ENCODE measurements at regions of chr7 and their contacts with region 1.

Region 1: GRCh38 chr7:21253740-21254687 is 173.9 kb upstream of the SP4 start:
- DNase-seq: peak; percentile 84
- H3K4me3 Mint-ChIP-seq: peak overlapping the region; percentile 73
- H3K27ac Mint-ChIP-seq: no peak overlapping the region
- H3K4me1 Mint-ChIP-seq: peaks cover 9% of the 10 kb centered on the region
- H3K27me3 Mint-ChIP-seq: peaks cover 56% of the 10 kb centered on the region

Region 2: DNA sequence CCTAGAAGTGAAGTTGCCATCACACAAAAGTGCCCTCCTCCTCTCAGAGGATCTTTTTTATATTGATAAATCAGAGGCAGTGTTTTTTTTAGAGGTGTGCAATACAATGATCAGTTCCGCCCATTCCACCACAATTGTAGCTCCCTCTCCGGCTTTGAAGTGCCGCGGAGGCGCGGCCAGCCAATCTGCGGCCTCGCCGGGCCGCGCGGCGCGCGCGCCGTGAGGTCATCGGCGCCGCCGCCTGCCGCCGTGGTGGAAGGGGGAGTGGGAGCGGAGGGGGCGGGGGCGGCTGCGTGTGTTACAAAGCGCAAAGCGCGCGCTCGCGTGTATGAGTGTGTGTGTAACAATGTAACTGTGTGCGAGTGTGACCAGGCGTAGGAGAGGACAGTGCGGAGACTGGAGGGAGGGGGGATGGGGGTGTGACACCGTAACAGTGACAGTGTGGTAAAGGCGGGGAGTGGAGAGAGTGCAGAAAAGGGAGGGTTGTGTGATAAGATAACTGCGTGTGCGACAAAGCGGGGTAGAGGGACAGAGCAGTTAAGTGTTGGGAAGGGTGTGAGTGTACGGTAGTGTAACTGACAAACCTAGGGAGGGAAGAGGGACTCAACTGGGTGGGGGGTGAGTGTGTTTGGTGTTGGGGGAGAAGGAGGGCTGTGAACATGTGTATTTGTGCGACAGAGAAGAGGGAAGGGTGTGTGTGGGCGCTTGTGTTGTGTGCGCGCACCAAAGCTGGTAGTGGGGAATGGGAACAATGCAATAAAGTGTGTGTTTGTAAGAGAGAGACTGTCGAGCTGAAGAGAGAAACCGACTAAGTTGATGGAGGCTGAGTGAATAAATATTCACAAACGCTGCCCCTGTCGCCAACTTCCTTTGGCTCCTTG is 467.0 kb before region 1 on chr7 and contains the start of gene SP8:
- intact Hi-C with region 1: loop called (anchors 5 kb)
- DNase-seq: peak; percentile 70
- H3K4me3 Mint-ChIP-seq: peak within 1 kb of the TSS; percentile 66
- H3K27ac Mint-ChIP-seq: peak within 1 kb of the TSS; percentile 83
- H3K4me1 Mint-ChIP-seq: peaks cover 22% of the 10 kb centered on the region
- H3K27me3 Mint-ChIP-seq: peaks cover 75% of the 10 kb centered on the region
- total RNA-seq, gene SP8: not detected in 2 replicates

Region 3: DNA sequence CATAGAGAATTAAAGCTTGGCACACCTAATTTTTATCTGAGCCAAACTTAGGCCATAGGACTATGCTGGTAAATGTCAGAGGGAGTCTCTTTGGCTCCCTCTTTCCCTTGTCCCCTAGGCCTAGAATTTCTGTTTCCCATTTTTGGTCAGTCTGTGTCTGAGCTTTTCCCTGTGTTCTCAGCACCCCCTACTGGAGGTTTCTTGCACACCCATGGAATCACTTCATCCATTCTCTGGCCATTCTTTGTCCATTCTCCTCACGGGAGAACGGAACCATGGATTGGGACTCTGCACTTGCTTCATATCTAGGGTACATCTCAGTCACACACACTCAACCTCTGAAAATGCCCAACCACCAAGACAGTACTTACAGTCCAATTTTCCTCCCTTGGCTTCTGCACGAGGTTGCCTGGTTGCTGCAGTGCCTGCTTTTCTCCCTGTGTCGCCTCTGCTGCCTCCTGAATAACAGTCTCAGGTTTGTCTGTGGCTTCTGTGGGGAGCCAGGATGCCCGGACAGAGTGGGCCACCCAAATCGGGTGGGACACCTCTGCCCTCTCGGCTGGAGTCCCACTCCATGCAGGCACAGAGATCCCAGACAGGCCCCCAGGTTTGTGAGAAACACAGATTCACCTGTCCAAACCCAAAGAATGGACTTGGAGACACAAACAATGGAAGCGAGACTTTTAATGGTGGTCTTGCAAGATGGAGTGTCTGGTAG is 253.8 kb after region 1 on chr7:
- intact Hi-C with region 1: loop called (anchors 2 kb)
- DNase-seq: peak; percentile 73
- H3K4me3 Mint-ChIP-seq: no peak overlapping the region
- H3K27ac Mint-ChIP-seq: no peak overlapping the region
- H3K4me1 Mint-ChIP-seq: peaks cover 4% of the 10 kb centered on the region
- H3K27me3 Mint-ChIP-seq: no peaks in the 10 kb centered on the region

Region 4: DNA sequence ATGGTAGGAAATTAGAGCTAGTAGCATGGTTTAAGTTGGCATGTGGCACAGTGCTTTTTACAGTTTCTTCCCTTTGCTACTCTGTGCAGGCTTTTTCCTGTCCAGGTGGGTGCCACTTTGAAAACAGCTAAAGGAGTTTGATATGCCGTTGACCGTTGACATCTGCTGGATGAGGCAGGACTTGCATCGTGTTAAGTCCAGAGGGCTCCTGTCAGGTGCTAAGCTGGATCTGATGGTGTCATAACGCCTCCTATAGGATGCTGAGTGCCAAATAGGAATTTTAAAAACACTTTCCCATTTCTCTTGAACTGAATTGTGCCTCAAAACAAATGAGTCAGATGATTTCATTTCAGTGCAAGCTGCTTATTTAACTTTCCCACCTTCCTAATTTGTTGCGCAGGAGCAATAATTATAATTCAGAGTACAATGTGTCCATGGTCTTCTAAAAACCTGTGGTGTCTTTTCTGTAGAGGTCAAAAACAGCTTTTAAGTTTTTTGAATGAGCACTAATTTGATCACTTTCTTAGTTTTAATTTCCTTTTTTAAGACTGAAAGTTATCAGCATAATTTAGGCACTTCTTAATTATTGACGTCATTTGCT is 513.4 kb after region 1 on chr7:
- intact Hi-C with region 1: loop called (anchors 1 kb)
- DNase-seq: peak; percentile 79
- H3K4me3 Mint-ChIP-seq: no peak overlapping the region
- H3K27ac Mint-ChIP-seq: no peak overlapping the region
- H3K4me1 Mint-ChIP-seq: peaks cover 18% of the 10 kb centered on the region
- H3K27me3 Mint-ChIP-seq: peaks cover 14% of the 10 kb centered on the region

Region 5: GRCh38 chr7:22082886-22083703 is 829.1 kb after region 1 on chr7:
- intact Hi-C with region 1: loop called (anchors 10 kb)
- DNase-seq: peak; percentile 94
- H3K4me3 Mint-ChIP-seq: peak overlapping the region; percentile 78
- H3K27ac Mint-ChIP-seq: no peak overlapping the region
- H3K4me1 Mint-ChIP-seq: peaks cover 10% of the 10 kb centered on the region
- H3K27me3 Mint-ChIP-seq: peaks cover 43% of the 10 kb centered on the region